Left cardiac atrium (tissue), 4 donors: ENCODE measurements at regions of chr4 and their contacts with region 1.

Region 1: GRCh38 chr4:111631215-111631999 is 513.8 kb upstream of the FAM241A start:
- DNase-seq: no peak
- ATAC-seq: no peak

Region 2: DNA sequence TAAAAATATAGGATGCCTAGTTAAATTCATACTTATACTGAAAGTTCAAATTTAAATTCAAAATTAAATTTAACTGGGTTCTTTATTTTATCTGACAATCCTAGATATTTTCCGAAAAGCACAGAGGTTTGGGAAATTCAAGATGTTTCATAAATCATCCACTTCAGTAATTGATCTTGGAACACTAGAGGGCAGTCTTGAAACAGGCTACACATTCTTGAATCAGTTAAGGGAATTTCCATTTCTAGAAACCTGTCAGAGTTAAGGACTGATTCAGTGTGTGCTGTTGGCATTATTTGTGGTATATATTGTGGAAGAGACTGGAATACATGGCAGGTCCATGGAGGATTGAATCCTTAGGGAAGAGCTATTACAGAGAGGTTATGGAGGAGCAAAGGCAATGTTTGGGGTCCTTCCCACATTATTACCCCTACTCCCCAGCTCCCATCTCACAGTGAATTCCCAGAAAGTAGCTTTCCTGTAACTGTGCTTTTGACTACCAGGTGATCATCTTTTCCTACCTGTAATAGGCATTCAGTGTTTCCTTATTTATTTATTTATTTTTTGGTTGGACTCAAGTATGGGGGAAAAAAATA is 1625.8 kb before region 1 on chr4:
- intact Hi-C with region 1: loop called in 1 of 2 experiments (anchors 10 kb)
- DNase-seq: no peak
- ATAC-seq: peak; percentile 38 to 50

Region 3: DNA sequence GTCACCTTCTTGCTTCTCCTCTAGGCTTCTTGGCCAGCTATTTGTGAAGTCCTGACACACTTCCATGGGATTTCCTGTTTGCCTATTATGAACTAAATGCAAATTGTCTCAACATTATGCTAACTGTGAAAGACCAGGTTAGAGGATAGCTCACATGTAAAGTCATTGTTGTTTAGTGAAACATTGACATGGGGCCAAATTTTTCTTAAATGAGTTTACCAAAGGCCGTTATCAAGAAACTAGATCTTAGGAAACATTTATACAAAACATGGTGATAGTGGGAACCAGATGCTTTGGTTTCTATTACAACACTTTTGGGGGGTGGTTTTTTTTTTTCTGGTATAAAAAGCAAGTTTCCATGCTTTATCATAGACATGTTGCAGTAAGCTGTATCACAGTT is 47.1 kb after region 1 on chr4:
- intact Hi-C with region 1: no loop called
- DNase-seq: no peak
- ATAC-seq: no peak